ENCODE measurements at regions of chr1 and their contacts with region 1.

Region 1: GRCh38 chr1:9269078-9269501 is 23.6 kb upstream of the SPSB1 start:
- DNase-seq: no peak

Region 2: GRCh38 chr1:8718850-8719361 is 550.2 kb before region 1 on chr1:
- intact Hi-C with region 1: no loop called
- DNase-seq: no peak

Region 3: GRCh38 chr1:9376886-9377333 is 107.8 kb after region 1 on chr1:
- intact Hi-C with region 1: no loop called
- DNase-seq: no peak

Region 4: GRCh38 chr1:9573723-9574122 is 304.6 kb after region 1 on chr1:
- intact Hi-C with region 1: loop called (anchors 10 kb)
- DNase-seq: no peak

Measured in cardiac septum (tissue), 1 donor.